ENCODE measurements at regions of chr5 and their contacts with region 1.

Region 1: DNA sequence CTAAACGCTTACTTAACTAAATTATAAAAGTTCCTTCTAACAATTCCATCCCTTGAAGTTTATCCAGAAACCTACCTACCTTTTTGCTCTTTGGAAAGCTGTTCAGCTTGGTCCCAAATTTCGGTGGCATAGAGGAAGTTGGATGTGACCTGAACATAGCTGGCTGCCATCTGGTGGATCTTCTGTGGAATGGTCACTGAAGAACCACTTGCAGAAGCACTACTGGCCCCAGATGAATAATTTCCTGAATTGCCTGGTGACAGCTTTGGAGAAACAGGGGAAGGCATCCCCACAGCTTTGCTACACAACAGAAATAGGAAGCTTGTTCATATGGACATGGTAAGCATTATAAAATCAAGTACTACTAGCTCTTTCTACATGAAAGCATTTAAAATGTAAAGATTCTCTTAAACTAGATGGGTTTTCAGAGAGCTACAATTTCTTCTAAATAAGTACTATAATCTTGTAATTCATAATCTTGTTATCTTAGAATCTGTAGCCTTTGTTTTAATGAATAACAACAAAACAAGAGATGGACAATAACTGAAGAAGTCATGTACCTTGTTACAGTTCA is 9.9 kb downstream of the LEAP2 start:
- DNase-seq: peak in 2 of 3 donors; percentile 34 to 48
- ATAC-seq: peak; percentile 78 to 86
- H3K4me3 ChIP-seq: no peak overlapping the region
- H3K27ac ChIP-seq: no peak overlapping the region
- H3K4me1 ChIP-seq: no peaks in the 10 kb centered on the region
- H3K27me3 ChIP-seq: no peaks in the 10 kb centered on the region

Region 2: GRCh38 chr5:132829742-132830435 is 53.5 kb before region 1 on chr5:
- intact Hi-C with region 1: loop called in 1 of 4 experiments (anchors 5 kb)
- DNase-seq: peak; percentile 81 to 92 (median 91)
- ATAC-seq: peak; percentile 89 to 90
- H3K4me3 ChIP-seq: peak overlapping the region; percentile 49
- H3K27ac ChIP-seq: peak overlapping the region; percentile 5
- H3K4me1 ChIP-seq: no peaks in the 10 kb centered on the region
- H3K27me3 ChIP-seq: no peaks in the 10 kb centered on the region